GM10248 (cell line): ENCODE measurements at regions of chr14 and their contacts with region 1.

Region 1: DNA sequence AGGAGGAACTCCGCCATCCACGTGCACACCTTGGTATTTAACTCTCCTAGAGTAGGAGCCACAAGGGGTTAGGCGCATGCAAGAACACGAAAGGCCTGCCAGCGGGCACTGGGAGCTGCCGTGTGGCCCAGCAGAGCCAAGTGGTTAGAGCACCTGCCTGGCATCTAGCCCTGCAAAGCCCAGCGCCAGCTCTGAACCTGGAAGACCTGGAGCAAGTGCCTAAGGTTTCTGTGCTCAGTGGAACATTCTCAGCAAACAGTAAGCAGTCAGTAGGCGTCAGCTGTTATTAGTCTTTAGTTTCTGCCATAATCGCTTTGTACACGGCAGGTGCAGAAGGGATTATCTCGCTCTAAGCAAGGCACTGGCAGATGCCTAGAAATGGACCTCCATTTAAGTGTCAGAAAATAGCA is 55.4 kb downstream of the SETD3 start:
- DNase-seq: no peak
- CTCF ChIP-seq: no peak

Region 2: GRCh38 chr14:99436247-99437180 is 11.2 kb after region 1 on chr14:
- CTCF ChIA-PET with region 1: interaction called, 10 read pairs
- POLR2A ChIA-PET with region 1: no interaction called
- DNase-seq: no peak
- CTCF ChIP-seq: no peak